ENCODE measurements at regions of chr7 and their contacts with region 1.

Region 1: DNA sequence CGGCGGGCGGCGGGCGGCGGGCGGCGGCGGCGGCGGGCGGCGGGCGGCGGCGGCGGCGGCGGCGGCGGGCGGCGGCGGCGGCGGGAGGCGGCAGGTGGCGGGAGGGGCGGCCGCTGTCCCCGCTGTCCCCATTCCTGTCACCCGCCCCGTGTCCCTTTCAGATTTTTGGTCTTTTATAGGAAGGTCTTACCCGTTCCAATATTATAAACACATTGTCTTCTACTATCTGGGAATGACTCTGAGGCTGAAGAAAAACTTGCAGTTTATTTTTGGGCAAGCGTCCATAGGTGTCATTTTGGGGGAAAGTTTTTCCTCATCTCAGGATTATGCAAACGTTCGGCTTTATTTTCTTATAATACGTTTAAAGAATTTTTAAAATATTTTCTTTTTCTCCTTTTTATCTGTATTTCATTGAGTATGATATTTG is 578 bp downstream of the ZNF713 start:
- DNase-seq: no peak
- ATAC-seq: no peak
- H3K4me3 ChIP-seq: peak overlapping the region; percentile 96
- H3K27ac ChIP-seq: no peak overlapping the region
- H3K4me1 ChIP-seq: no peaks in the 10 kb centered on the region
- H3K27me3 ChIP-seq: no peaks in the 10 kb centered on the region

Region 2: DNA sequence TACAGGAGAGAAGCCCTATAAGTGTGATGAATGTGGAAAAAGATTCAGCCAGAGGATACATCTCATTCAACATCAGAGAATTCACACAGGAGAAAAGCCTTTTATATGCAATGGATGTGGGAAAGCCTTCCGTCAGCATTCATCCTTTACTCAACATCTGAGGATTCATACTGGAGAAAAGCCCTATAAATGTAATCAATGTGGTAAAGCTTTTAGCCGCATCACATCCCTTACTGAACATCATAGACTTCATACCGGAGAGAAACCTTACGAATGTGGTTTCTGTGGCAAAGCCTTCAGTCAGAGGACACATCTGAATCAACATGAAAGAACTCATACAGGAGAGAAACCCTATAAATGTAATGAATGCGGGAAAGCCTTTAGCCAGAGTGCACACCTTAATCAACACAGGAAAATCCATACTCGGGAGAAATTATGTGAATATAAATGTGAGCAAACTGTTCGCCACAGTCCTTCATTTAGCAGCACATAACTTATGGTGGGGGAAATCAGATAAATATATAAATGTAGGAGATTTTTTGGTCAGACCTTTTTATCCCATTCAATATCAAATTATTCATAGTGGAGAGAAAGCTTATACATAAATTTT is 51.8 kb after region 1 on chr7:
- intact Hi-C with region 1: loop called in 1 of 4 experiments (anchors 10 kb)
- DNase-seq: no peak
- ATAC-seq: no peak
- H3K4me3 ChIP-seq: no peak overlapping the region
- H3K27ac ChIP-seq: no peak overlapping the region
- H3K4me1 ChIP-seq: no peaks in the 10 kb centered on the region
- H3K27me3 ChIP-seq: no peaks in the 10 kb centered on the region

Region 3: GRCh38 chr7:55951637-55952351 is 64.0 kb after region 1 on chr7 and contains the start of gene MRPS17:
- intact Hi-C with region 1: loop called in 2 of 4 experiments (anchors 10 kb)
- DNase-seq: peak; percentile 92 to 97 (median 96)
- ATAC-seq: peak; percentile 100
- H3K4me3 ChIP-seq: peak within 1 kb of the TSS; percentile 66
- H3K27ac ChIP-seq: peak within 1 kb of the TSS; percentile 58
- H3K4me1 ChIP-seq: no peaks in the 10 kb centered on the region
- H3K27me3 ChIP-seq: no peaks in the 10 kb centered on the region
- total RNA-seq, gene MRPS17: 16.6 to 22.2 (median 19.3) TPM

Region 4: GRCh38 chr7:55977831-55978230 is 90.0 kb after region 1 on chr7:
- intact Hi-C with region 1: no loop called
- DNase-seq: no peak
- ATAC-seq: peak in 1 of 2 donors; percentile 36
- H3K4me3 ChIP-seq: no peak overlapping the region
- H3K27ac ChIP-seq: no peak overlapping the region
- H3K4me1 ChIP-seq: peaks cover 4% of the 10 kb centered on the region
- H3K27me3 ChIP-seq: no peaks in the 10 kb centered on the region